Dendritic cell treated with granulocyte-macrophage colony-stimulating factor and Interleukin-4, amounts not matched to agents 40 ng/mL and 50 ng/mL, for 4 days (primary cell): ENCODE measurements at regions of chr4 and their contacts with region 1.

Region 1: GRCh38 chr4:13654158-13654797 is 26.8 kb upstream of the BOD1L1 start:
- H3K4me3 Mint-ChIP-seq: peak overlapping the region; percentile 75
- H3K27ac Mint-ChIP-seq: no peak overlapping the region
- H3K4me1 Mint-ChIP-seq: peaks cover 19% of the 10 kb centered on the region
- H3K27me3 Mint-ChIP-seq: peaks cover 16% of the 10 kb centered on the region

Region 2: DNA sequence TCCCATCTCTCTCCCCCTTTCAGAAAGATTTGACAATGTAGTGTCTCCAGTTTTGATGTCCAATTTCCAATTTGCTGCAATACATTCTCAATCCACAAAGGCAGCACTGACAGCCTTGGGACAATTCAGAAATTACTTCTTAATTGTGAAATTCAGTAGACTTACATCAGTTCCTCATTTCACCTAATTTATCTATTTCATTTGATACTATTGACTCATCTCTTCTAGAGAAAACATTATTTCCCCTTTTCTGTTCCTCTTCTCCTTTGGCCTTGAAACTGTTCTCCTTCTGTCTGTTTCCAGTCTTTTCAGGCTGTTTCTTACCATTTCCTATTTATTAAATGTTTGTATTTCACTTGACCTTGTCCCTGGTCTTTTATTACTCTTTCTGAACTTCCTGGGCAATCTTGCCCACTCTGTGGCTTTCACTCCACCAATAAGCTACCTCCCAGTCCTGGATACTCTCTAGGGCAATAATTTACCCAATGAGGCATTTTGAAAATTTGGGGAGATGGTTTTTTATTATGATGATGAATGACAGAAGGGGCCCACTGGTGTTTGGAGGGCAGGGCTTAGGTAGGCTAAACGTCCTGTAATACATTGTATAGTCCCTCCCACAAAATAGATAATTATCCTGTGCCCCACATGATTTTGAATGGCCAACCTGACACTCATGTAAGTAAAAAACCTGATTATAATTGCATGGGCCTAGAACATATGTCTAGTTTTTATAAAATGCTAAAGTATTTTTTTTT is 471.3 kb after region 1 on chr4:
- intact Hi-C with region 1: loop called (anchors 10 kb)
- H3K4me3 Mint-ChIP-seq: no peak overlapping the region
- H3K27ac Mint-ChIP-seq: peak overlapping the region; percentile 61
- H3K4me1 Mint-ChIP-seq: peaks cover 58% of the 10 kb centered on the region
- H3K27me3 Mint-ChIP-seq: no peaks in the 10 kb centered on the region

Region 3: GRCh38 chr4:14168919-14169318 is 514.6 kb after region 1 on chr4:
- intact Hi-C with region 1: loop called (anchors 10 kb)
- H3K4me3 Mint-ChIP-seq: no peak overlapping the region
- H3K27ac Mint-ChIP-seq: no peak overlapping the region
- H3K4me1 Mint-ChIP-seq: peaks cover 63% of the 10 kb centered on the region
- H3K27me3 Mint-ChIP-seq: peaks cover 2% of the 10 kb centered on the region

Region 4: GRCh38 chr4:14787894-14788293 is 1133.6 kb after region 1 on chr4:
- intact Hi-C with region 1: loop called (anchors 1 kb)
- H3K4me3 Mint-ChIP-seq: no peak overlapping the region
- H3K27ac Mint-ChIP-seq: no peak overlapping the region
- H3K4me1 Mint-ChIP-seq: no peaks in the 10 kb centered on the region
- H3K27me3 Mint-ChIP-seq: peaks cover 9% of the 10 kb centered on the region

Region 5: GRCh38 chr4:15162465-15163283 is 1508.4 kb after region 1 on chr4:
- intact Hi-C with region 1: loop called (anchors 2 kb)
- H3K4me3 Mint-ChIP-seq: no peak overlapping the region
- H3K27ac Mint-ChIP-seq: no peak overlapping the region
- H3K4me1 Mint-ChIP-seq: no peaks in the 10 kb centered on the region
- H3K27me3 Mint-ChIP-seq: peaks cover 3% of the 10 kb centered on the region

Region 6: DNA sequence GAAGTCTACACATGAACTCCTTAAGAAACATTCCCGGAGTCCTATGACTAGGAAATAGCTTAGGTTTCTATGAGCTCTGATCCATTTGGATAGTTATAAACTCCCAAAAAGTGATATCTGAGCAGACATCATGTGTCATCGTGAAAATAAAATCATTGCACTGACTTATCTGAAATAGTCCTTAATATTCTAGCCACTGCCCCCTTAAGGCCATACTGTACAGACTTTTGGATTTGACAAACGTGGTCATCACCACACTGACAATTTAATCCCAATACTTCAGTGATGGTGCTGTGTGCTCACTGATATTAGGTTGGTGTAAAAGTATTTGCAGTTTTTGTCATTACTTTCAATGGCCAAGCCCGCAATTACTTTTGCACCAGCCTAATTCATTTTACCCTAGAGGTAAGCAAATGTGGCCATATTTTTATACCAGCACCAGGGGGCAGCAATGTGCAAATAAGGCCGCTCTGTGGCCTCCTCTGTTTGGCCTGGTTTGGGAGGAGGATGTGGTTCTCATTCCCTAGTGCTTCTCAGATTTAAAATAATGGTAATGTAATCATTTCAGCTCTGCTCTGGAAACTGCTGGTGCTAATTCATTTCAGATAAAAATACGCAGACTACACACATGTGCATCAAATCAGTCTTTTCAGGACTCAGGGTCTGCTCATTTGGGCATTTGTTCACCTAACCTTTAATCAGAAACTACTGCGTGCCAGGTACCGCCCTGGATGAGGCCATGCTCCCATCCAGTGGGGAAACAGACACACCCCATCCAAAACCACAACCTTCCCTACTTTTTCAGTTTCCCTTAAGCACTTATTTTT is 1577.2 kb after region 1 on chr4:
- intact Hi-C with region 1: loop called (anchors 10 kb)
- H3K4me3 Mint-ChIP-seq: no peak overlapping the region
- H3K27ac Mint-ChIP-seq: no peak overlapping the region
- H3K4me1 Mint-ChIP-seq: peaks cover 18% of the 10 kb centered on the region
- H3K27me3 Mint-ChIP-seq: no peaks in the 10 kb centered on the region

Region 7: DNA sequence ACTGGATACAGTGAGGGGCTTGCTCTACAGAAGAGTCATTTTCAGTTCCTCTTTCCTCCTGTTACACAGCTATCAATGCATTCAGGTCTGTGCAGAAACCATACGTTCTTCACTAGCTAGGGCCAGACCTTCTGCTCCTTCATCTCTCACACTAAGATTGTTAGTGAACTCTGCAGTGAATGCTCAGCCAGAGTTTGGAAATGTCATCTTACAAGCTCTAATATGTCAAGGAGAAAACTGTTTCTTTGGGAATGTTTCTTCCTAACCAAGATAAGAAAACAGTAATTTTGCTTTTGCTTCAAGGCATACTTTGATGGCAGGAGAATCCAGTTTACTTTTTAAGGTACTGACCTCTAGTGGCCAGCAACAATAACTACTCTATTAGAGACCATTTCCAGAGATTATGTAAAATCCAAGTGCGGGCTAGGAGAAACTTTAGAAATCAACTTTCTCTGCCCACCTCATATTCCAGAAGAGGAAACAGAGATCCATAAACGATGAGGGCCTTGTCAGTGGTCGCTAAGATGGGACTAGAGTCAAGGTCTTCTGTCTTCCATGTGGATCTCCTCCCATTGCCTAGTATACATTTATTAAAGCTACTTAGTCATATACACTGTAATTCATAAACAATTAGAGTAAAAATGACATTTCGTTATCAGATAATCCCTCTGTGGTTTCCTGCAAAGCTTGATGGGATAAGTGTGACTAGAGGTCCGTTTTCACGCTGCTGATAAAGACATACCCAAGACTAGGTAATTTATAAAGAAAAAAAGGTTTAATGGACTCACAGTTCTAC is 1803.3 kb after region 1 on chr4:
- intact Hi-C with region 1: loop called (anchors 5 kb)
- H3K4me3 Mint-ChIP-seq: no peak overlapping the region
- H3K27ac Mint-ChIP-seq: no peak overlapping the region
- H3K4me1 Mint-ChIP-seq: peaks cover 29% of the 10 kb centered on the region
- H3K27me3 Mint-ChIP-seq: no peaks in the 10 kb centered on the region